ENCODE measurements at regions of chr19 and their contacts with region 1.

Region 1: DNA sequence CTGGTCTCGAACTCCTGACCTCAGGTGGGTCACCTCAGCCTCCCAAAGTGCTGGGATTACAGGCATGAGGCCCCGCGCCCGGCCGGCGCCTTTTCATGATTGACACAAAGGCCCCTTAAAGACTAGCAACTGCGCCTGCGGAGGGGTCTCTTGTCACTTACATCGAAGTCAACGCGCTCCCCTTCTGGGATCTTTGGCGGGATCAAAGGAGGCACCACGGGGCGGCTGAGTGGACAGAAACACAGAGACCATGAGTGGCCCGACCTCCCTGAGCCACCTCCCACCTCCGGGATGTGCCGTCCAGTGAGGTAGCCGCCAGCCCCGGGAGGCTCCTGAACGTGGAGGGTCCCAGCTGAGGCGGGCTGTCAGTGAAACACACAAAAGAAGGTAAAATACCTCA is 7.3 kb downstream of the TNNT1 start:
- DNase-seq: no peak
- ATAC-seq: no peak
- H3K4me3 ChIP-seq: no peak overlapping the region
- H3K27ac ChIP-seq: no peak overlapping the region
- H3K4me1 ChIP-seq: peaks cover 10% of the 10 kb centered on the region
- H3K27me3 ChIP-seq: peaks cover 0 to 22% of the 10 kb centered on the region in 2 donors
- CTCF ChIP-seq: no peak
- POLR2A ChIP-seq: no peak

Region 2: DNA sequence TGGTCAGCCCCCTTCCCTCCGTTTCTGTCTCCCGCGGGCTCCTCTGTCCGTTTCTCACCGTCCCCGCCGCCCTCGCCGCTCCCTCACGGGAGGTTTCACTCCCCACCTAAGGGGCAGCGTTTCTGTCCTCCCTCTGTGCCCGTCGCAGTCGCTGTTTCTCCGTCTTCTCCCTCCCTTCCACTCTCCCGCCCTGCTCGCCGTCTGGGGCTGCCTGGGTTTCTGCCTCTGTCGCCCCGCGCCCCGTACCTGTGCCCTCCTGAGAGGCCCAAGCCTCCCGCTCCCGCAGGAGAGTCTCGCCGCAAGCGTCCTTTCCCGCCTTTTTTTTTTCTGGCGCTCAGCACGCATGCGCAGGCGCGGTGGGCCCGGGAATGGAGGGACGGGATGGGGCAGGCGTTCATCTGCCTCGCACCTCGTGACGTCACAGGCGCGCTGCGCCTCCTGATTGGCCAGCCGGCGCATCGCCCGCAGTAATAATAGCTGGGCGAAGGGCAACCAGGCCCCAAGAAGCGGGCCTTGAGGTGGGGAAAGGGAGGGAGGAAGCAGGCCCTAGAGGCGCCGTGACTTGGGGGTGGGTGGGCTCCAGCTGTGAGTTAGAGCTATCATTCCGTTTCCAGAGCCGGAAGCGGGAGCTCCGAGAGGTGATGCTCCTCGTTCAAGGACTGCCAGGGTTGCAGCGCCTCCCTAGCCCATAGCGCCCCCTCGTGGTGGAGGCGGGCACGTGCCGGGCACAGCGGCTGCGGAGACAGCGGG is 362.0 kb after region 1 on chr19:
- intact Hi-C with region 1: loop called (anchors 5 kb)
- DNase-seq: peak; percentile 88 to 95 (median 93)
- ATAC-seq: peak; percentile 96
- H3K4me3 ChIP-seq: no peak overlapping the region
- H3K27ac ChIP-seq: peak overlapping the region in 2 of 4 donors; percentile 34 to 69
- H3K4me1 ChIP-seq: peaks cover 10% of the 10 kb centered on the region
- H3K27me3 ChIP-seq: no peaks in the 10 kb centered on the region
- CTCF ChIP-seq: peak; percentile 92 to 98 (median 97)
- POLR2A ChIP-seq: no peak